Activated CD4-positive, alpha-beta T cell treated with anti-CD3 and anti-CD28 coated beads, Interleukin-2, amount 10 ng/mL, durations not matched to agents 24 days and 14 days (primary cell): ENCODE measurements at regions of chr3 and their contacts with region 1.

Region 1: DNA sequence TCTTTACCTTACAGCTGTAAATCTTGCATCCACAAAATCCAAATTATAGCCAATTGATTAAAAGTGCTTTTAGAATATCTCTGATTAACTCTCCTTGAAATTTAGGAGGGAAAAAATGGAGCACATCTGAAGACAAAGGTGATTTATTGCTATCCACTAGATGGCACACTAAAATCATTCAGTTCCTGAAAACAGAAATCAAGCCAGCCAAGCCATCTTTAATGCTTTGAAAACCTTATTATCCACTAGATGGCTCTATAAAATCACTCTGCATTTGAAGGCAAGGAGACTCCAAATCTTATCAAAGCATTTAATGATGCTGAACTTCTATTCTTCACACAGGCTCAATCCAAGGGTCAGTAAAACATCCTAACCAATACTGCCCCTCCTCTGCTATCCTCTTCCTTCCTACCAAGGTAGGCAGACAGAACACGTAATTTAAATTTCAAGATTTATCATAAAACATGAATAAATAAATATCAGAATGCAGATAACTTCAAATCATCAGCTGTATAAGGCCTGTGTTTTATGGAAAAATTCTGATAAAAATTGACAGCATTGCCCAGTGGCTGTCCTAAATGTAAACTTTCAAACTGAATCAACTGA is 48.4 kb downstream of the GOLIM4 start:
- DNase-seq: peak; percentile 64
- H3K4me3 Mint-ChIP-seq: no peak overlapping the region
- H3K27ac Mint-ChIP-seq: no peak overlapping the region
- H3K4me1 Mint-ChIP-seq: no peaks in the 10 kb centered on the region
- H3K27me3 Mint-ChIP-seq: no peaks in the 10 kb centered on the region

Region 2: GRCh38 chr3:167918686-167919085 is 128.6 kb before region 1 on chr3:
- intact Hi-C with region 1: no loop called
- DNase-seq: no peak
- H3K4me3 Mint-ChIP-seq: no peak overlapping the region
- H3K27ac Mint-ChIP-seq: no peak overlapping the region
- H3K4me1 Mint-ChIP-seq: no peaks in the 10 kb centered on the region
- H3K27me3 Mint-ChIP-seq: peaks cover 2% of the 10 kb centered on the region

Region 3: DNA sequence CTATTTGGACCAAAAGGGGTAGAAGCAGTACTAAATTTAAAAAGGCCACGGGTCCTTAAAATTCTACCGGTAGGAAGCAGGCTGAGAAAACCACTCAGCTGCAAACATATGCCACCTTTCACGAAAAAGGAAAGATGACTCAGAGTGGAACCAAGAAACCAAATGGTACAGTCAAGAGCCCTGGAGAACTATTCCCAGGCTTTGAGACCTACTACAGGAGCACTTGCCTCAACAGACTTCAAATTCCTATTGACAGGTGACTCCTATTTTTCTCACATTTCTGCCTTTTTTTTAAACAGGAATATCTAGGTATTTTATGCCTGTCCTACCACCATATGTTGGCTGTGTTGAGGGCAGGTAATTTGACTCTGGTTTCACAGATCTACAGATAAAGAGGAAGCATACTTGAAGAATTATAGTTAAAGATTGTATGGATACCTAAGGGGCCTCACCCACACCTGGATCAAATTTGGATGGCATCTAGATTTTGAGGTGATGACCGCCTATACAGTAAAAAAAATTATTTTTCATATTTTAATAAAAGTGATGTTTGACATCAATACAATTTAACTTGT is 38.3 kb after region 1 on chr3:
- intact Hi-C with region 1: no loop called
- DNase-seq: no peak
- H3K4me3 Mint-ChIP-seq: no peak overlapping the region
- H3K27ac Mint-ChIP-seq: no peak overlapping the region
- H3K4me1 Mint-ChIP-seq: peaks cover 7% of the 10 kb centered on the region
- H3K27me3 Mint-ChIP-seq: peaks cover 8% of the 10 kb centered on the region

Region 4: GRCh38 chr3:168095611-168096209 is 48.4 kb after region 1 on chr3 and contains the start of gene GOLIM4:
- intact Hi-C with region 1: loop called (anchors 1 kb)
- DNase-seq: peak; percentile 86
- H3K4me3 Mint-ChIP-seq: peak within 1 kb of the TSS; percentile 83
- H3K27ac Mint-ChIP-seq: peak within 1 kb of the TSS; percentile 86
- H3K4me1 Mint-ChIP-seq: peaks cover 10% of the 10 kb centered on the region
- H3K27me3 Mint-ChIP-seq: peaks cover 36% of the 10 kb centered on the region
- total RNA-seq, gene GOLIM4: 8.5 and 8.6 TPM in 2 replicates

Region 5: DNA sequence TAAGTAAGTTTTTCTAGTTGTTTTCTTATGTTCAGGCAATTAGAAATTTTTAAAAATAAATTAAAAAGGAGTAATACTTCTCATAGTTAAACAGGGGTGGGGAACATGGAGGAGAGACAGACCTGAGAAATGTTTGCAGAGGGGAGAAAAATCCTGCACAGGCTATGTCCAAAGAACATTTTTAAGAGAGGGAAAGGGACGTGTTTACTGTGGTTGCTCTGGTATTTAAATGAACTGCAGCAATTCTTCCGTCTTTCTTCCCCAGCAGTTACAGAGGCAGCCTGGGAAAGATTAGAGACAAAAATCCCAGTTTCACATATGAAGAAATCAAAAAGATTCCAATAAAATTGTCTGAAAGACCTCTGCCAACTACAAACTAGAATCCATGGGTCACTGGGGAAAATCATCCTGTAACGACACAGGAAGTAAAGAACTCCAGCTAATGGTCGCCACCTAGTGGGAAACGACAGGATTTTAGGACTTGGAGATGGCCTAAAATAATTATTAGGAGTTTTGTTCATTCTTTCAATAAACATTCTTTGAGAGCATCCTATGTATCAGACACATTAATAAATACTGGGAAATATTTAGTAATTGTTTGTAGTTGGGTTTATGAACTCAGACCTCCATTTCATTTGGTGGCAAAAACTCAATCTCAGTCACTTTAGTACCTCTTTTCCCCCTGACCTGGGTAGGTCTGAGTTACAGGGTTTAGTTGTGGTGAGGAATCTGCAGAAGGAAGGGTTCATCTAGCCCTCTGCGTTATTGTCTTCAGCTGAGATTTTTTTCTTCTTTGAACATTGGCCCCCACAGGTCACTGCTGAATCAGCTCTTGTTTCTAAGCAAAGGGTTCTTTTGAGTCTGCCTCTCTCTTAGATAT is 118.3 kb after region 1 on chr3:
- intact Hi-C with region 1: loop called (anchors 1 kb)
- DNase-seq: peak; percentile 76
- H3K4me3 Mint-ChIP-seq: no peak overlapping the region
- H3K27ac Mint-ChIP-seq: no peak overlapping the region
- H3K4me1 Mint-ChIP-seq: peaks cover 2% of the 10 kb centered on the region
- H3K27me3 Mint-ChIP-seq: no peaks in the 10 kb centered on the region

Region 6: DNA sequence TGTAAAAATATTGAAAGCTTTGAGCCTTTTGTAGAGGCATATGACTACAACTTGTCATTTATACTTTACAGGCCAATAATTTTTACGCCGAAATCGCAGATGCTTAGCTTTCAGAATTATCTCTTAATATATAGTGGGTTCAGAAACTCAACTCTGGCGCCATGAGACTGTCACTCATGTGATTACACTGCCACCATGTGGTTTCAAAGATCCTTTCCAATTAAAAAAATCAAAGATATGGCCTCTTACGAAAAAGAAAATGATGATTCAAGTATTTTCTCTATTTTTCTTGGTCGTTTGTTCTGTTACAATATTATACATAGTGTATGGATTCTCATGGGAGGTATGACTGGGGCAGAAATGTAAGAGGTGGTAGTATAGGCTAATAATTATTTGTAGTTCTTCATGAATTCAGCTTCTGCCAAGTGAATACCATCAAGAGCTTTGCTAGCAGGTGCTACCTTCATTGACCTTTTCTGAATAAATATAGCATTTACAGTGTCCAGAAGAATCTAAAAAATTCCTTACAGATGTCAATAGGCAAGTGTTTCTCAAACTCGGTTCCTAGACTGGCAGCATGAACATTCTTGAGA is 800.1 kb after region 1 on chr3:
- intact Hi-C with region 1: loop called (anchors 2 kb)
- DNase-seq: no peak
- H3K4me3 Mint-ChIP-seq: no peak overlapping the region
- H3K27ac Mint-ChIP-seq: no peak overlapping the region
- H3K4me1 Mint-ChIP-seq: no peaks in the 10 kb centered on the region
- H3K27me3 Mint-ChIP-seq: peaks cover 2% of the 10 kb centered on the region